Tibial artery (tissue), 4 donors: ENCODE measurements at regions of chr11 and their contacts with region 1.

Region 1: GRCh38 chr11:10293423-10294289 is at the start of gene SBF2:
- DNase-seq: peak; percentile 89
- H3K4me3 ChIP-seq: peak within 1 kb of the TSS; percentile 86 to 90
- H3K27ac ChIP-seq: peak within 1 kb of the TSS; percentile 93 to 97
- H3K4me1 ChIP-seq: peaks cover 0 to 38% (median 12%) of the 10 kb centered on the region in 4 donors
- H3K27me3 ChIP-seq: no peaks in the 10 kb centered on the region
- CTCF ChIP-seq: no peak

Region 2: DNA sequence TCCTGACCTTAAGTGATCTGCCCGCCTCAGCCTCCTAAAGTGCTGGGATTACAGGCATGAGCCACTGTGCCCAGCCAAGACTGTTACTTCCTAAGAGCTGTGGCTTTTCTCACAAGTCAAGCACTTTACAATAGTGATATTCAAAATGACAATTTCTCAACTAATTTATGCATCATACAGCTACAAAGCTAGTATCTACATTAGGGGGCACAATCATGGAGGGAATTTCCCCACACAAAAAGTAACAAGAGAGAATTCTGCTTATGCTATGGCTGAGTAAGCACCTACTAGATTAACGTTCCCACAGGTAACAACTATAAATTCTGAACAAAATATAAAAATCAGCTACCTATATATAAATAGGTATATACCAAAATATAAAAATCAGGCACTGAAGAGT is 72.3 kb before region 1 on chr11:
- intact Hi-C with region 1: loop called (anchors 5 kb)
- DNase-seq: no peak
- H3K4me3 ChIP-seq: no peak overlapping the region
- H3K27ac ChIP-seq: no peak overlapping the region
- H3K4me1 ChIP-seq: peaks cover 0 to 19% (median 0%) of the 10 kb centered on the region in 4 donors
- H3K27me3 ChIP-seq: no peaks in the 10 kb centered on the region
- CTCF ChIP-seq: no peak

Region 3: GRCh38 chr11:10255388-10256125 is 38.1 kb before region 1 on chr11:
- intact Hi-C with region 1: no loop called
- DNase-seq: no peak
- H3K4me3 ChIP-seq: no peak overlapping the region
- H3K27ac ChIP-seq: no peak overlapping the region
- H3K4me1 ChIP-seq: no peaks in the 10 kb centered on the region
- H3K27me3 ChIP-seq: no peaks in the 10 kb centered on the region
- CTCF ChIP-seq: no peak

Region 4: DNA sequence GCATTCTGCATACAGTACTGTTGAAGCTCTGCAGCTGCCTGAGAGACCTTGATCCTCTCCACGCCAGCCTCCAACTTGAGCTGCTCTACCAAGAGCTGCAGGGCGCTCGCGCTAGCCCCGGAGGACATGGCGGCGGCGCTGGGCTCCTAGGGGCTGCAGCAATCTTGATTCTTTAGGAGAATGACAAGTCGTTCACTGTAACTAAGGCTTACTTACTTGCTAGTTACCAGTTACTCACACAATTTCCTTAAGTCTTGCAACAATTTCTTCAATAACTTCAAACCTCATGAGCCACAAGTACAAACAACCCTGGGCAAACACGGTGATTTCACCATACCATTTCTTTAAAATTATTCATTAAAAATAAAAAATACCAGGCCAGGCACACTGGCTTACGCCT is 21.5 kb before region 1 on chr11:
- intact Hi-C with region 1: no loop called
- DNase-seq: no peak
- H3K4me3 ChIP-seq: no peak overlapping the region
- H3K27ac ChIP-seq: no peak overlapping the region
- H3K4me1 ChIP-seq: peaks cover 0 to 17% (median 6%) of the 10 kb centered on the region in 4 donors
- H3K27me3 ChIP-seq: no peaks in the 10 kb centered on the region
- CTCF ChIP-seq: no peak